ENCODE measurements at regions of chr2 and their contacts with region 1.

Region 1: GRCh38 chr2:98444436-98445176 is at the start of gene INPP4A:
- DNase-seq: peak; percentile 79
- ATAC-seq: peak; percentile 93
- H3K4me3 Mint-ChIP-seq: peak within 1 kb of the TSS; percentile 90
- H3K27ac Mint-ChIP-seq: peak within 1 kb of the TSS; percentile 82
- H3K4me1 Mint-ChIP-seq: peaks cover 23% of the 10 kb centered on the region
- H3K27me3 Mint-ChIP-seq: no peaks in the 10 kb centered on the region
- CTCF ChIP-seq: no peak
- total RNA-seq, gene INPP4A: 19.6 and 26.6 TPM in 2 replicates

Region 2: DNA sequence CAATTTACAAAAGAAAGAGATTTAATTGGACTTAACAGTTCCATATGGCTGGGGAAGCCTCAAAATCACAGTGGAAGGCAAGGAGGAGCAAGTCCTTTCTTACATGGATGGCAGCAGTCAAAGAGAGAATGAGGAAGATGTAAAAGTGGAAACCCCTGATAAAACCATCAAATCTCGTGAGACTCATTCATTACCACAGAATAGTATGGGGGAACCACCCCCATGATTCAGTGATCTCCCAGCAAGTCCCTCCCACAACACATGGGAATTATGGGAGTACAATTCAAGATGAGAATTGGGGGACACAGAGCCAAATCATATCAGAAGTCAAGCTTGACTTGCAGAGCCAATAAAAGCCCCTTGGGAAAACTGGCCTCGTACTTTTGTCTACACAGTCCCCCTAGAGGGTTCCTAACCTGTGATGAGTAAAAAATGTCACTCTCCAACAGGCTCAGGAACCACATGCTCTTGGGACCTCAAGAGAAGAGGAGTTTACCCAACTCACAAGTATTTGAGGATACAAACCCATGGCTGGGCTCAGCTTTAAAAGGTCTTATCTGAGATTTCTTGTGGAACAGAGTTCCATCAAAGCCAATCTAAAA is 11.1 kb before region 1 on chr2:
- CTCF ChIA-PET with region 1: no interaction called
- POLR2A ChIA-PET with region 1: no interaction called
- intact Hi-C with region 1: no loop called
- DNase-seq: no peak
- ATAC-seq: peak; percentile 56
- H3K4me3 Mint-ChIP-seq: no peak overlapping the region
- H3K27ac Mint-ChIP-seq: no peak overlapping the region
- H3K4me1 Mint-ChIP-seq: peaks cover 5% of the 10 kb centered on the region
- H3K27me3 Mint-ChIP-seq: peaks cover 3% of the 10 kb centered on the region
- CTCF ChIP-seq: no peak

Region 3: GRCh38 chr2:98479959-98480524 is 35.4 kb after region 1 on chr2:
- CTCF ChIA-PET with region 1: no interaction called
- POLR2A ChIA-PET with region 1: no interaction called
- intact Hi-C with region 1: loop called (anchors 5 kb)
- DNase-seq: no peak
- ATAC-seq: peak; percentile 37
- H3K4me3 Mint-ChIP-seq: no peak overlapping the region
- H3K27ac Mint-ChIP-seq: no peak overlapping the region
- H3K4me1 Mint-ChIP-seq: peaks cover 72% of the 10 kb centered on the region
- H3K27me3 Mint-ChIP-seq: no peaks in the 10 kb centered on the region
- CTCF ChIP-seq: no peak

Measured in activated B cell treated with CpG ODN at 0.5 μM for 24 hours (primary cell).